Right ventricle myocardium superior (tissue), 1 donor: ENCODE measurements at regions of chr12 and their contacts with region 1.

Region 1: GRCh38 chr12:52380271-52380694 is 5.2 kb downstream of the KRT84 start:
- DNase-seq: peak; percentile 67
- ATAC-seq: peak; percentile 38

Region 2: DNA sequence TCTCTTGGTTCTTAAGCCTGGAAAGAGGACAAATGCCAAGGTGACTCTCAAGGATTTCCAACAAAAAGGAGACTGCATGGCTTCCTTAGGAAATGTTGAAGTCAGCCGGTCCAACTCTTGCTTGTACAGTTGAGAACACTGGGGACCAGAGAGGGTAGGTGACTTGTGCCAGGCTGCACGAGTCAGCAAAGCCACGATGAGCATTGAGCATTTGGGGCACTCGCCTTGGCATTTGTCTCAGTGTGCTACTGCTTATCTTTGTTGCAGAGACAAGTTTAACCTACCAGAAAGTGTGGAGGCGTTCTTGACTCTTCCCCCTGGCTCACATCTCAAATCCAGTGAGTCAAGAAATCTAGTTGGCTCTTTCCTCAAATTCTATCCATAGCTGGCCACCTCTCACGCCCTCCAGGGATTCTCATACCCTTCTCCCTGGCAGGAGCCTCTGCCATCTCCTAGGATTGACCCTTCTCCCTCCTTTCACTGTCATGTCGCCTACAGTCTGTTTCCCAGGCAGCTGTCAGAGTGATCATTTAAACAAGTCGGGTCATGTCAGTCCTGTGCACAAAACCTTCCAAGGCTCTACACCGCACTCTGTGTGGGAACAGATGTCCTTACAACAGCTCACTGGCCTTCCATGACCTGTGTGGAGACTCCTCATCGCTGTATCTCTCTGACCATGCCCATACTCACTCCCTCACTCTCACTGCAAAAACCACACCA is 41.9 kb before region 1 on chr12:
- intact Hi-C with region 1: no loop called
- DNase-seq: no peak
- ATAC-seq: no peak

Region 3: GRCh38 chr12:52506858-52507715 is 126.8 kb after region 1 on chr12:
- intact Hi-C with region 1: loop called (anchors 10 kb)
- DNase-seq: no peak
- ATAC-seq: peak; percentile 71